ENCODE measurements at regions of chrX and their contacts with region 1.

Region 1: GRCh38 chrX:47026198-47026597 is 52.0 kb upstream of the RGN start:
- DNase-seq: no peak
- ATAC-seq: no peak

Region 2: GRCh38 chrX:46898207-46898606 is 128.0 kb before region 1 on chrX:
- intact Hi-C with region 1: loop called in 1 of 2 experiments (anchors 10 kb)
- DNase-seq: no peak
- ATAC-seq: no peak

Measured in left colon (tissue), 2 donors.